Activated T-helper 1 cell treated with anti-CD3 and anti-CD28 coated beads, Interleukin-12 subunit alpha, Interleukin-12 subunit beta, Interleukin-2, Interleukin-4 antibody, amounts not matched to agents 30 ng/mL and 10 ng/mL and 1 ng/mL, durations not matched to agents 14 hours and 24 hours and 36 hours (primary cell): ENCODE measurements at regions of chr2 and their contacts with region 1.

Region 1: DNA sequence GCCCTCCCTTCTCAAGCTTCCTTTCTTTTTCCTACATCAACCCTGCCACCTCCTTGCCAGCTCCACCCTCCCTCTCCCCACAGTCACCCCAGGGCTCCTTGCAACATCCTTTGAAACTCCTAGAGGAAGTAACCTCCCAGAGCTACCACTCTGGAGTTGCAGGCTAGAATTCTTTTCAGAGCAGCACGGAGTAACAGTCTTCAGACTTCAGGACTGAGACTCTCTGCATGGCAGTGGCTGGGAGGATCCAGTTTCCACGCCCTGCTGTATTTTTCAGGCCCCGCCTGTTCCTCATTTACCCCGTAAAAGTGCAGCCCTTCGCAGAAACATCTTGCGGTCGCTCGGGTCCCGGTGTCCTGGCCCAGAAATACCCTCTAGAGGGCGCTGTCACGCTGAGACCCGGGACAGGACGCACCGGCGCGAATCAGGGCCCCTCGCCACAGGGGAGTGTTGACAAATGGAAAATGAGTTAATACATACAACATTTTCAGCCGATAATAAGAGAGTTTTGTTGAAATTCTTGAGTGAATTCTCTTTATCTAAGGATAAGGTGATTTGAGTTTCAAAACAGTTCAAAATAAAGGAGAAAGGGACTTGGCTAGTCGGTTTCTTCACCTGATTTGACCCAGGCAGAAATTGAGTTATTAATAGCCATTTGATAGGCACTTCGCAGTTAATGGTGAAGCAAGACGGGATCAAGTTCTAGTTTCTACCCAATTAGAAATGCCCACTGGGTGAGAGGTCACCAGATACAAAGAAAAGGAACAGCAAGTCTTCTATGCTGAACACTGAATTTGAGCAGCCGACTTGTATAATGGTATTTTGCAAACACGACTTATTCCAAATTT is 18.5 kb upstream of the NTSR2 start:
- DNase-seq: peak; percentile 78
- H3K4me3 Mint-ChIP-seq: peak overlapping the region; percentile 37
- H3K27ac Mint-ChIP-seq: no peak overlapping the region
- H3K4me1 Mint-ChIP-seq: peaks cover 10% of the 10 kb centered on the region
- H3K27me3 Mint-ChIP-seq: peaks cover 26% of the 10 kb centered on the region

Region 2: GRCh38 chr2:11784747-11785610 is 96.5 kb after region 1 on chr2:
- intact Hi-C with region 1: loop called (anchors 1 kb)
- DNase-seq: peak; percentile 18
- H3K4me3 Mint-ChIP-seq: no peak overlapping the region
- H3K27ac Mint-ChIP-seq: no peak overlapping the region
- H3K4me1 Mint-ChIP-seq: no peaks in the 10 kb centered on the region
- H3K27me3 Mint-ChIP-seq: no peaks in the 10 kb centered on the region

Region 3: GRCh38 chr2:11980809-11981208 is 292.4 kb after region 1 on chr2:
- intact Hi-C with region 1: no loop called
- DNase-seq: no peak
- H3K4me3 Mint-ChIP-seq: no peak overlapping the region
- H3K27ac Mint-ChIP-seq: no peak overlapping the region
- H3K4me1 Mint-ChIP-seq: no peaks in the 10 kb centered on the region
- H3K27me3 Mint-ChIP-seq: peaks cover 11% of the 10 kb centered on the region